GM12878 (cell line): ENCODE measurements at regions of chr6 and their contacts with region 1.

Region 1: GRCh38 chr6:135054569-135055498 is at the start of gene HBS1L:
- DNase-seq: peak; percentile 98
- ATAC-seq: peak; percentile 98
- H3K4me3 ChIP-seq: peak within 1 kb of the TSS; percentile 89
- H3K27ac ChIP-seq: peak within 1 kb of the TSS; percentile 94
- H3K4me1 ChIP-seq: no peaks in the 10 kb centered on the region
- H3K27me3 ChIP-seq: no peaks in the 10 kb centered on the region
- CTCF ChIP-seq: no peak
- EP300 ChIP-seq: no peak; a peak in 1 of 4 replicates
- POLR2A ChIP-seq: peak; percentile 96
- RAD21 ChIP-seq: no peak
- polyA plus RNA-seq, gene HBS1L: 58.7 to 83.6 TPM

Region 2: GRCh38 chr6:134954272-134955000 is 100.4 kb before region 1 on chr6:
- CTCF ChIA-PET with region 1: no interaction called
- POLR2A ChIA-PET with region 1: no interaction called
- RAD21 ChIA-PET with region 1: no interaction called
- SMC1A ChIA-PET with region 1: no interaction called
- in situ Hi-C with region 1: no loop called
- intact Hi-C with region 1: no loop called
- DNase-seq: no peak
- ATAC-seq: no peak; the same call in 2 of the 3 replicates
- H3K4me3 ChIP-seq: no peak overlapping the region
- H3K27ac ChIP-seq: no peak overlapping the region
- H3K4me1 ChIP-seq: no peaks in the 10 kb centered on the region
- H3K27me3 ChIP-seq: no peaks in the 10 kb centered on the region
- CTCF ChIP-seq: no peak
- EP300 ChIP-seq: no peak
- POLR2A ChIP-seq: no peak
- RAD21 ChIP-seq: no peak

Region 3: GRCh38 chr6:135008072-135008940 is 46.5 kb before region 1 on chr6:
- CTCF ChIA-PET with region 1: interaction called, 10 read pairs
- POLR2A ChIA-PET with region 1: interaction called, 8 read pairs
- RAD21 ChIA-PET with region 1: interaction called, 15 read pairs
- SMC1A ChIA-PET with region 1: interaction called, 21 read pairs
- in situ Hi-C with region 1: no loop called
- intact Hi-C with region 1: no loop called
- DNase-seq: peak; percentile 56
- ATAC-seq: peak; percentile 91
- H3K4me3 ChIP-seq: 0 out of 2 replicates have a peak overlapping the region, but pooled peaks have one; percentile 16
- H3K27ac ChIP-seq: peak overlapping the region; percentile 64
- H3K4me1 ChIP-seq: peaks cover 28% of the 10 kb centered on the region
- H3K27me3 ChIP-seq: no peaks in the 10 kb centered on the region
- CTCF ChIP-seq: no peak
- EP300 ChIP-seq: peak; percentile 43 to 66; a peak in 2 of 4 replicates
- POLR2A ChIP-seq: no peak
- RAD21 ChIP-seq: no peak

Region 4: DNA sequence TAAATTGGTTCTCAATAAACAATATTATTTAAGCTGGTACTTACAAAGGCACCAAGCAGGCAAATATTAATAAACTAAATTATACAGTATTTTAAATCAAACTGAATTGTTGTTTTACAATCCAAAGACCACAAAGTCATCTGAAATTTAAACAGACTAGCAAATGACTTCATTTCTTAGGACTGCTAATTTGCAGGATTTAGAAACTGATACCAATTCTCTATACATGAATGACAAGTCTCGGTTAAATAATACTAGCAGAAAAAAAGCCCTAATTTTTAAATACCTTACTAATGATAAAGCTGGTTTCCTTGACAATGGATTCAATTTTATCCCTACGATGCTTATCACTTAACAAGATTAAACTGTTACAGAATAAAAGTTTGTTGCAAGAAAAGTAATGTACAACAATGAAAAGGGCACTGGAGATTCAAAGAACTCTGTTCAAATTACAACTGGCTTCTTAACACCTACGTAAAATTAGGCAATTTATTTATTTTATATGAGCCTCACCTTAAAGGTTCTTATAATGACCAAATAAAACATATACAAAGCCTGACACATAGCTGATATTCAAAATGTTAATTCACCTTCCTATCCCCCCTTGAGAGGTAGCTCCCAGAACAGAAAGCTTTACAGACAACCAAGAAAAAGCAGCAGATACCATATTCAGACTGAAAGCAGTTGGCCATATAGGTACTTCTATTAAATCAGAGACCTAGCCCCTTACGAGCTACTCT is 33.4 kb before region 1 on chr6:
- CTCF ChIA-PET with region 1: interaction called, 6 read pairs
- POLR2A ChIA-PET with region 1: interaction called, 9 read pairs
- RAD21 ChIA-PET with region 1: interaction called, 14 read pairs
- SMC1A ChIA-PET with region 1: interaction called, 18 read pairs
- in situ Hi-C with region 1: no loop called
- intact Hi-C with region 1: no loop called
- DNase-seq: no peak
- ATAC-seq: peak; percentile 91
- H3K4me3 ChIP-seq: 0 out of 2 replicates have a peak overlapping the region, but pooled peaks have one; percentile 13
- H3K27ac ChIP-seq: peak overlapping the region; percentile 54; the same call in 1 of the 2 replicates
- H3K4me1 ChIP-seq: peaks cover 12% of the 10 kb centered on the region; the same call in 1 of the 2 replicates
- H3K27me3 ChIP-seq: no peaks in the 10 kb centered on the region
- CTCF ChIP-seq: no peak
- EP300 ChIP-seq: peak in 1 of 2 experiments; percentile 26; a peak in 1 of 4 replicates
- POLR2A ChIP-seq: no peak
- RAD21 ChIP-seq: no peak

Region 5: DNA sequence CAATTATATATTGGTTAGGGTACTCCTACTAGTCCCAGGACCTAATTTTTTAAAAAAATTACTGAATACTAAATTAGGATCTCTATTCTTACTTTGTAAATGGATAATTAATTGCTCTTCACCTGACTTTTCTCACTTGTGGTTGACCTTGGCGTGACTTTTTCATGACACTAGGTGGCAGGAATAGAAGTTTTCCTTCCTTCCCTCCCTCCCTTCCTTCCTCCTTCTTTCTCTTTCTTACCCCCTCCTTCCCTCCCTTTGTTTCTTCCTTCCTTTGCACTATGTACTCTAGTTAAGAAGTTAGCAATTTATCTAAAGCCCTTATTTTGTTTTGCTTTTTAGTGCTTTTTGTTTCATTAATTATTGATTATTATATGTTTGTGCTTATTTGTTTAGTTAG is 20.2 kb after region 1 on chr6:
- CTCF ChIA-PET with region 1: interaction called, 5 read pairs
- POLR2A ChIA-PET with region 1: no interaction called
- RAD21 ChIA-PET with region 1: interaction called, 4 read pairs
- SMC1A ChIA-PET with region 1: interaction called, 14 read pairs
- in situ Hi-C with region 1: no loop called
- intact Hi-C with region 1: no loop called
- DNase-seq: no peak
- ATAC-seq: no peak
- H3K4me3 ChIP-seq: no peak overlapping the region
- H3K27ac ChIP-seq: no peak overlapping the region
- H3K4me1 ChIP-seq: no peaks in the 10 kb centered on the region
- H3K27me3 ChIP-seq: no peaks in the 10 kb centered on the region
- CTCF ChIP-seq: peak in 1 of 3 experiments; percentile 27; a peak in 1 of 6 replicates
- EP300 ChIP-seq: no peak
- POLR2A ChIP-seq: no peak
- RAD21 ChIP-seq: no peak

Region 6: GRCh38 chr6:135128268-135128914 is 73.6 kb after region 1 on chr6:
- CTCF ChIA-PET with region 1: interaction called, 3 read pairs
- POLR2A ChIA-PET with region 1: no interaction called
- RAD21 ChIA-PET with region 1: interaction called, 4 read pairs
- SMC1A ChIA-PET with region 1: interaction called, 10 read pairs
- in situ Hi-C with region 1: no loop called
- intact Hi-C with region 1: no loop called
- DNase-seq: no peak
- ATAC-seq: peak; percentile 97
- H3K4me3 ChIP-seq: no peak overlapping the region
- H3K27ac ChIP-seq: peak overlapping the region; percentile 45; the same call in 1 of the 2 replicates
- H3K4me1 ChIP-seq: peaks cover 8% of the 10 kb centered on the region
- H3K27me3 ChIP-seq: no peaks in the 10 kb centered on the region
- CTCF ChIP-seq: no peak
- EP300 ChIP-seq: no peak
- POLR2A ChIP-seq: no peak
- RAD21 ChIP-seq: no peak